ENCODE measurements at regions of chr4 and their contacts with region 1.

Region 1: GRCh38 chr4:56799824-56800756 is 21.4 kb downstream of the SPINK2 start:
- DNase-seq: peak; percentile 85 to 94 (median 86)
- ATAC-seq: peak; percentile 100
- H3K4me3 ChIP-seq: peak overlapping the region; percentile 32 to 42
- H3K27ac ChIP-seq: peak overlapping the region; percentile 34 to 80
- H3K4me1 ChIP-seq: peaks cover 0 to 8% of the 10 kb centered on the region in 2 donors
- H3K27me3 ChIP-seq: no peaks in the 10 kb centered on the region
- CTCF ChIP-seq: peak; percentile 69 to 72

Region 2: DNA sequence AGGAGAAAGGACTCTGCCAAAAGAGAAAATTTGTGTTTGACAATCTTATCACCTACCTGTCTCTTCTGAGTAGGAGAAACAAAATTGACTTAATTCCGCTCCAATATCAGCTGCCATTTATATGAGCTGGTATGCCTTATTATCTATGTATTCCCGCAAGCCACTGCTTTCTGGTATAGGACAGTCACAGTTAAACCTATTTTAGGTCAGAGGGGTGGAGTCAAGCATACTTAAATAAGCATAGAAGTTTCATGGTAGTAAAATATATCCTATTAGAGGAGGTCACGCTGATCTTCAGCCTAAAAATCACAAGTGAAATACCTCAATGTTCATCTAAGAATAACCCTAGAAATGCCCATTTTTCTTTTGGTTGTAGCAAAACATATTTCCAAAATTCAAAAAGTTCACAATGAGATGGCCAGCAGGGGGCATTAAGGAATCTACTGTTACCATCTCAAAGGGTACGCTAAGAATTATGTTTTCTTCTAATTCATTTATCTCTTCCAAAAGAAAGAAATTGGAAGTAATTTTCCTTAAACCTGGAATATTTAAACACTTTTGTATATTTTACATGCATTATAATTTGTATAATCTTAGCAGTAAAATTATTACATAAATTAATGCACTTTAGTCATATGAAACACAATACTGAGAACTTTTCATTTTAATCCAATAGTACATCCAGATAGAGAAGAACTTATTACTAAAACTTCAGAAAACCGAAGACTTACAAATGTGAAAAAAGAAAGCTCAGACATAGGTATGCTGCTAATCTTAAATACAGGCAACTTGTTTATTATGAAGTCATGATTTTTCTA is 375.2 kb before region 1 on chr4:
- intact Hi-C with region 1: loop called in 1 of 2 experiments (anchors 5 kb)
- DNase-seq: peak in 1 of 4 donors; percentile 41
- ATAC-seq: peak; percentile 60
- H3K4me3 ChIP-seq: no peak overlapping the region
- H3K27ac ChIP-seq: no peak overlapping the region
- H3K4me1 ChIP-seq: no peaks in the 10 kb centered on the region
- H3K27me3 ChIP-seq: no peaks in the 10 kb centered on the region
- CTCF ChIP-seq: peak; percentile 38 to 59

Region 3: DNA sequence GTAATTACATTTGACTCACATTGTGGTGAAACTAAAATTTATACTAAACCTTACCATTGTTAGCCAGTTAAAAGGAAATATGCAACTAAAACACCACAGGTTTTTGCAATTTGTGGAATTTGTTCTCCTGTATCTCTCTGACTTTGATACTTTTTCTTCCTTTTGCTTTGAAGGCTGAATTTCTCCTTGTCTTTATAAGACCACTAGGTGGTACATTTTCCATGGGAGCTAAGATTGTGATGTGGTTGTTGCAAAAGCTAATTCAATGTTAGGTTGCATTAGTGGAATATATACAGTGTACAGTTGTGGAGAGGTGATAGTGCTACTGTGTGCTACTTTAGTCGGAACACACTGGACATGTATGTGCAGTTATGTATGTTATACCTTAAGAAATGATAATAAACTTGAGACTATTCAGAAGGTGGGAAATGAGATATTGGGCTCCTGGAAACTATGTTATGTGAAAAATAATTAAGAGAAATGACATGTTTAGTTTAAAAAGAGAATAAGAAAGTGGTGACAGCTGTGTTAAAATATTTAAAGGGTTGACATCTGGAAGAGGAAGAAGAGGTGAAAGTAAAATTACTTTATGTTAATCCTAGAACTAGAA is 224.2 kb before region 1 on chr4:
- intact Hi-C with region 1: loop called in 1 of 2 experiments (anchors 10 kb)
- DNase-seq: peak in 2 of 4 donors; percentile 17 to 45
- ATAC-seq: peak; percentile 72
- H3K4me3 ChIP-seq: no peak overlapping the region
- H3K27ac ChIP-seq: no peak overlapping the region
- H3K4me1 ChIP-seq: no peaks in the 10 kb centered on the region
- H3K27me3 ChIP-seq: no peaks in the 10 kb centered on the region
- CTCF ChIP-seq: peak; percentile 30 to 51

Region 4: DNA sequence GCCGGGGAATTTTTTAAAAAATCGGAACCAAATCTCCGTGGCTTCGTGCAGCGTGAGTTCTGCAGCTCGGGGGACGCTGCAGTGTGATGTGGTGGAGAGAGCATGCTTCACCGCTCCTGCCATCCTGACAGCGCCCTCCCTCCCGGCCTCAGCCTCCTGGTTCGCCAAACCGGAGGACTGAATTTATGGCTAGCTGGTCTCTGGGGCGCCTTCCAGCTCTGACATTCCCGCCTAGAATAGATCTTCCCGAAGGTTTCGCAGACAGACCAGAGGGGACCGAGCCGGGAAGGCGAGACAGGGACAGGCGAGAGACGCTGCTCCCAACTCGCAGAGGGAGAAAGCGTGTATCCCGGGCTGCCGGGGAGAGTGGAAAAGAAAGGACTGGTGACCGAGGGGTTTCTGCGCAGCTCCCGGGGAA is 144.9 kb before region 1 on chr4:
- intact Hi-C with region 1: loop called in 1 of 2 experiments (anchors 10 kb)
- DNase-seq: peak in 2 of 4 donors; percentile 14 to 25
- ATAC-seq: peak; percentile 5
- H3K4me3 ChIP-seq: peak overlapping the region; percentile 23 to 39
- H3K27ac ChIP-seq: no peak overlapping the region
- H3K4me1 ChIP-seq: peaks cover 20 to 43% of the 10 kb centered on the region in 2 donors
- H3K27me3 ChIP-seq: peaks cover 4 to 58% of the 10 kb centered on the region in 2 donors
- CTCF ChIP-seq: no peak

Region 5: GRCh38 chr4:57668621-57669020 is 868.5 kb after region 1 on chr4:
- intact Hi-C with region 1: no loop called
- DNase-seq: no peak
- ATAC-seq: no peak
- H3K4me3 ChIP-seq: no peak overlapping the region
- H3K27ac ChIP-seq: no peak overlapping the region
- H3K4me1 ChIP-seq: no peaks in the 10 kb centered on the region
- H3K27me3 ChIP-seq: no peaks in the 10 kb centered on the region
- CTCF ChIP-seq: no peak